ENCODE measurements at regions of chr1 and their contacts with region 1.

Region 1: GRCh38 chr1:9413148-9413876 is 120.6 kb downstream of the SPSB1 start:
- DNase-seq: peak; percentile 52
- H3K4me3 Mint-ChIP-seq: peak overlapping the region; percentile 57
- H3K27ac Mint-ChIP-seq: peak overlapping the region; percentile 82
- H3K4me1 Mint-ChIP-seq: peaks cover 50% of the 10 kb centered on the region
- H3K27me3 Mint-ChIP-seq: peaks cover 11% of the 10 kb centered on the region

Region 2: DNA sequence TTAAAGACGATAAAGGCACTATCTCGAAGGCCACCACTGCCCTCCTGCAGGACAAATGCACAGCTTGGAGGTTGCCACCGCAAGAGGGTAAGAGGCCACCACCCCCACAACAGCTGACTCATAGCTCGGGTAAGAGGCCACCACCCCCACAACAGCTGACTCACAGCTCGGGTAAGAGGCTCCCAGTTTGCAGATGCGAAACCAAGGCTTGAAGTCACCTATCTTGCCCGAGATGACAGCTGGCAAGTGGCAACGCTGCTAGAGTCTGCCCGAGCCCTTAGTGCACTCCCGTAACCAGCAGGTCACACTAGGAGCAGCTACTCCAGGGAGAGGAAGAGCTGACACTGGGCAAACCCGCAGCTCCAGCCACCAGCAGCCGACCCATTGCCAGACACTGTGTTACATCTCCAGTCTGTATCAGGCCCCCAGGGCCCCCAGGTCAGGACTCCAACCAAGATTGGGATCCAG is 137.7 kb before region 1 on chr1:
- intact Hi-C with region 1: loop called (anchors 1 kb)
- DNase-seq: peak; percentile 58
- H3K4me3 Mint-ChIP-seq: peak overlapping the region; percentile 45
- H3K27ac Mint-ChIP-seq: peak overlapping the region; percentile 65
- H3K4me1 Mint-ChIP-seq: peaks cover 39% of the 10 kb centered on the region
- H3K27me3 Mint-ChIP-seq: peaks cover 2% of the 10 kb centered on the region